ENCODE measurements at regions of chr3 and their contacts with region 1.

Region 1: DNA sequence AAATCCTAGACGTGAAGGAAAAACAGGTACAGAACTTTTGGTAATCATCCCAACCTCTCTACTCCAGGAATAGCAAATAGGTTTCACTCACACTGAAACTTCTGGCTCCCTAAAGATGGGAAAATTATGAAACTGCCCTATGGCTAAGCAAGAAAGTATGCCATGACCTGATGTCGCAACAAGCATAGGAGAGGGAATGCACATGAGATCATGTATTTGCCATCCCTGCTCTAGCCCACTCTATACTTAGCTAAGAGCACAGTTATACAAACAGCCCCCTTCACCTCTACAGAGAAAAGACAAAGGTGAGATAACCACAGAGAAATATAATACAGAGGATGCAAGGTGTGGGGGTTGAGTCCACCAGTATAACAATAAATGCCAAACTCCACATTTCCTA is 102.7 kb downstream of the TBC1D5 start:
- DNase-seq: no peak

Region 2: DNA sequence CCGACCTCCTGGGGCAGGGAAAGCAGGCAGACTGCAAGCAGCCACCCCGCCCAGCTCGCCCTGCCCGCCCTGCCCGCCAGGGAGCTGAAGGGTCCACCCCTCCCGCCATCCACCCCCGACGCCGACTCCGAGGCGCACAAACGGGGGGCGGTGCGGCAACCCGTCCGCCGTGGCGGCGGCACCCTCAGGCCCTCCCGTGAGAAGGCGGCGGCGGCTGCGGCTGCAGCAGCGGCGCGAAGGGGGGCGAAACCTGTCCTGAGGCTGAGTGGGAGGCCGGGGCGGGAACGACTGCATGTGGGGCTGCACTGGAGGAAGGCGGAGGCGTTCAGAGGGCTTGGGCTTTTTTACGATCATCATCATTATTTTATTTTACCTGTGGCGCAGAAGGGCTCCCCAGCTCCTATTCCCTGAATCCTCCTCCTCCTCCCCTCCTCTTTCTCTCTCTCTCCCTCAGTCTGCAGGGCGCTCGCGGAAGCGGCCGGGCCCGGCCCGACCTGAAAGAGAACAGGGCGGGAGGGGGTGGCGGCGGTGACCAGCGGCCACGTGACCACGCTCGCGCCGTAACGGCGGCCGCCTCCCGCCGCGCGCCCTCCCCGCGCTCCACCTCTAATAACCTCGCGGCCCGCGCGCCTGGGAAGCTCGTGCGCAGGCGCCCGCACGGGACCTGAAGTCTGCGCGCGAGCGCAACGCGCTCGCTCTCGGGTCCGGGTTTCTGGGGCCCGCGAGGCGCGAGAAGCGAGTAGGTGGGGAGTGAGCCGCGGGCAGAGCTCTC is 102.5 kb after region 1 on chr3 and contains the start of gene TBC1D5:
- intact Hi-C with region 1: loop called (anchors 5 kb)
- DNase-seq: peak; percentile 76 to 98 (median 95)